ENCODE measurements at regions of chr1 and their contacts with region 1.

Region 1: DNA sequence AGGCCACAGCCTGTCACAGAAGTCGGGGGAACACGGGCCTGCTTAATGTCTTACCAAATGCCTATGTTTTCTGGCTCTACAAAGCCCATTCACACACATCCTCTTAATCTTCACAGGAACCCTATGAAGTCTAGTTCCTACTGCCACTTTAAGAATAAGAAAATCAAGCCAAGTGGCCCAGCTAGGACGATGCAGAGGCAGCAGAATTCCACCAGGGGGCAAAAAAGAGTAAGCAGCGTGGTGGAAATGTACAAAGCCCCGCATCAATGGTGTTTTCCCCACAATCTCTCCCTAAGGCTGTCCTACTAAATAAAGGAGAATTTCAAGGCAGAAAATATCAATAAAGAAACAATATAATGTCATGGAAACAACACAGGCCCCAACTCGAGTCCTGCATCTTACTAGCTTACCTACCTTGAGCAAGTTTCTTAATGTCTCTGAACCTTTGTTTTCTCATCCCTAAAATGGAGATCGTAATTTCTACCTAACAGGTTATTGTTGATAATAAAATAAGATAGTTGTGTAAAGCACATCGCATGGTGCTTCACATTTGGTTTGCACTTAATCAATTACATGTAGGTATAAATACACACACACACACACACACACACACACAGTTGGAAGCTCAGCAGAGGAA is 21.4 kb downstream of the SEC16B start:
- DNase-seq: peak; percentile 46
- ATAC-seq: peak; percentile 51
- H3K4me3 Mint-ChIP-seq: no peak overlapping the region
- H3K27ac Mint-ChIP-seq: no peak overlapping the region
- H3K4me1 Mint-ChIP-seq: no peaks in the 10 kb centered on the region
- H3K27me3 Mint-ChIP-seq: no peaks in the 10 kb centered on the region

Region 2: GRCh38 chr1:177190308-177190970 is 758.0 kb before region 1 on chr1:
- CTCF ChIA-PET with region 1: no interaction called
- POLR2A ChIA-PET with region 1: no interaction called
- intact Hi-C with region 1: loop called in 1 of 2 experiments (anchors 10 kb)
- DNase-seq: no peak
- ATAC-seq: no peak
- H3K4me3 Mint-ChIP-seq: no peak overlapping the region
- H3K27ac Mint-ChIP-seq: no peak overlapping the region
- H3K4me1 Mint-ChIP-seq: no peaks in the 10 kb centered on the region
- H3K27me3 Mint-ChIP-seq: peaks cover 4% of the 10 kb centered on the region

Region 3: DNA sequence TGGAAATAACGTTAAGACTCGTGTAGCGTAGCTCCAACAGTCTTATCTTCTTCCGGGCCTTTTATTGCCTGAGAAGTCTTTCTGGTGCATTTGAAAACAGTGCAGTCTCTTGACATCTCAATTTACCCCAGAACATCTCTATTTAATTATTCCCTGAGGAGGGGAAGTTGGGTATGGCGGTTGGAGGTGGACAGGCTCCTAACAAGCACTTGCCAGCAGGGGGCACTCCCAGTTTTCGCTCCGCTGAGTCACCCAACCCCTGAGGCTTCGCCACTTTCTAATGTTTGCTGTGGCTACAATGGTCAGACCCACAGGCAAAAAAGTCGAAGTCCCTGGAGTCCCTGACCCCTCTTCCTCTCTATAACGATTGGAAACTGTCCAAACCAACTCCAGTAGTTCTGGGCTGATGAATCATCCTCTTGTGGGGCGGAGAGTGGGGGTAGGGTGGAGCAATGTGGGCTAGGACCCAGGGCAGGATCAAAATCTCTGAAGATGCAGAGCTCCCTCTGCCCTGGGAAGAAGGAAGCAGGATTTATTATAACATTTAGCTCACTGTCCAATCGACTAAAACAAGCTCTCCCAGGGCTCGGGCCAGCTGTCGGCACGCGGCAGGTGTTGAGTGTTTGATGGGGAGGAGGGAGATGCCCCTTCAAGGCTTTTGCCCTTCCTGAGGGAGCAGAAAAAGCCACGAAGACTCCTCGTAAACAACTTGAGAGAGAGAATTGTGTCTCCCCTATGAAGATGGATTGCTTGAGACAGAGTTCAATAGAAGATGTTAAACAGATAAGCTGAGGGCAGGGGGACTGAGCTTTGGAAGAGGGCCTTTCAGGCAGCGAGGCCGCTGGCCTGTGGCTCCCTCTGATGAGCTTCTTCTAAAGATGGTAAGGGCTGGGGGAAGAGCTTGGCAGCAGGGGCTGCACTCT is 692.0 kb before region 1 on chr1:
- CTCF ChIA-PET with region 1: no interaction called
- POLR2A ChIA-PET with region 1: no interaction called
- intact Hi-C with region 1: loop called in 1 of 2 experiments (anchors 5 kb)
- DNase-seq: peak; percentile 49
- ATAC-seq: no peak
- H3K4me3 Mint-ChIP-seq: no peak overlapping the region
- H3K27ac Mint-ChIP-seq: no peak overlapping the region
- H3K4me1 Mint-ChIP-seq: no peaks in the 10 kb centered on the region
- H3K27me3 Mint-ChIP-seq: peaks cover 3% of the 10 kb centered on the region

Measured in activated CD4-positive, alpha-beta T cell treated with anti-CD3 and anti-CD28 coated beads for 36 hours (primary cell).